GM10248 (cell line): ENCODE measurements at regions of chr5 and their contacts with region 1.

Region 1: DNA sequence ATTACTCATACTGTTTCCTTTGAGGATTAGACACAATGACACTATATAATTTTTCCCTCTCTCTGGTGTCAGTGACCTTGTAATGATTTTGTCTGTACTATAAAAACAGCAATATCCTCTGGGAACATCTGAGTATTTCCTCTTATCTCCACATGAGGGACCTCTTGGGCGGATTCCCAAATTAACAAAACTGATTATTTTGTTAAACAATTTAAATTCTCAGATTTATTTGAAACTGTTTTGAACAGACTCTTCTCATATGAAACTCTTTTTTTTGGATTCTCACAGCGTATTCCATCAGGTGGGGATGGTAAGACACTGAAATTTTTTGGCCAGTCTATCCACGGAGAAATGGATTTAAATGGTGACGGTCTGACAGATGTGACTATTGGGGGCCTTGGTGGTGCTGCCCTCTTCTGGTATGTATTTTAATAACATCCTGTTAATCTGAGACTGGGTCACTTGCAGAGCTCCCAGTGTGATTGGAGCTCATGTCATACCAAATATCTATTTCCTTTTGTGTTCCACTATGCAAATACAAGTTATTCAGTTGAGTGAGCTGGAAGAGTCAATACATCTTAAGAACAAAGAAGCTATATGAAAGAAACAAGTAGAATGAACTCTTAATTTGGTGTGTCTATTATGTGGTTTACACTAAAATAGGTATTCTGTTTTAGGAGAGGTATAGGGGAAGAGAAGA is 73.8 kb upstream of the ITGA2 start:
- DNase-seq: peak; percentile 62
- CTCF ChIP-seq: peak; percentile 64

Region 2: DNA sequence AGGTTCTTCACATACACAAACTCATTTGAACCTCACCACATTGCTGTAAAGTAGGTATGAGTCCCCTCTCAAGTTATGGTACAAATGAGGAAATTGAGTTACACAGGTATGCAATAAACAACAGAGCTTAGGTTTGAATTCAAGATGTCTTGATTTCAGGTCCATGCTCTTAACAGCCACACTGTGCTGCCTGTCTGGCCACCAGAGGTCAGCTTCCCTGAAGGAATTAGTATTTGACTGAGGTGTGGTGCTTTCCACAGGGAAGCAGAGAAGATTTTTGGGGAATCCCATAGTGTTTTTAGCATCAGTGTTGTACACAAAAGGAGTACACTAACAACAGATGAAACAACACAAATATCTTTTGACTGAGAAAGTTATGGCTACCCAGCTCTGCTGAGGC is 222.0 kb before region 1 on chr5:
- CTCF ChIA-PET with region 1: interaction called, 32 read pairs
- POLR2A ChIA-PET with region 1: interaction called, 5 read pairs
- DNase-seq: peak; percentile 20
- CTCF ChIP-seq: peak; percentile 75

Region 3: DNA sequence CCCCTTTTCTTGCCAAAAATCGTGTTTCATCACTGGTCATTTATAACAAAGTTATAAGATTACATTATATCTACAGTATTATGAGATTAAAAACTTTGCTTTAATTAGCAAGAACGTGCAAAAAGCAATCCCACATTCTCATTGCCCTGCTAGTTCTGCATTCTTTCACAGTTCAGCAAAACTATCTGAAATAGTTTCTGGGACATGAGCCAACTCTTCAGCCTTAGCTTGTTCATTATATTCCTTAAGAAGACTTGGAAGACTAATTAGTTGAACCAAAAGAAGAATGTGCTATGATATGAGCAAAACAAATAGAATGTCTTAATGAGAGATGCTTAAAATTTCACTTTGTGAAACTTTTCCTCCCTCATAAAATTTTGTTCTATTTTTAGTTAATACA is 51.0 kb before region 1 on chr5:
- CTCF ChIA-PET with region 1: no interaction called
- POLR2A ChIA-PET with region 1: no interaction called
- DNase-seq: no peak
- CTCF ChIP-seq: no peak

Region 4: DNA sequence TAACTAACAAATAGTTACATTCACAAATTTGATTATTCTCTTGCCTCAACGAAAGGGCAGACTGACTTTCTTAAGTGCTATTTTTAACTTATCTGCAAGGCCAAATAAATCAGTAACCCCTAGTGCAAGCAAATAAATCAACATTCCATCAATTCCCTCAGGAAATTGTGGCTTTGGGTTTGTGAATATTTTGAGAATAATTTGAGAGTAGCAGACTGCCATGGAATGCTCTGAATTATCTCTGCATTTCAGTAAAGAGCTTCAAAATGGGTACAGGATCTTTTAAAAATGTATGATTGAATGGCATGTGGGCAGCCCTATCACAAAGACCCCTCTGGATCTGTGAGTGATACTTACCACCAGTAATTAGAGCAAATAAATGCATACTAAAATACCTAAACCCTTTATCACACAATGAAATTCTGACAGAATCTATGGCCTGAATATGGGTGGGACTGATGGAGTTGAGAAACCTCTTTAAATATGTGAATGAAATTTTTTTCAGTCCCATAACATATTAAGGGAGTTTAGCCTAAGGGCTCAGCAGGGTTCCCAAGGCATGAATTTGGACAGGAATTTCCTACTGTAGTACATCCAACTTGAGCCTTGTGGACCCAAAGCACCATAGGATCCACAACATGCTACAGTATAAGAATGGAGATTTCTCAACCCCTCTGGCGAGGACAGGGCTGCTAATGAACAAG is 18.6 kb before region 1 on chr5:
- CTCF ChIA-PET with region 1: interaction called, 10 read pairs
- POLR2A ChIA-PET with region 1: no interaction called
- DNase-seq: no peak
- CTCF ChIP-seq: no peak